IMR-90 (cell line): ENCODE measurements at regions of chr5 and their contacts with region 1.

Region 1: DNA sequence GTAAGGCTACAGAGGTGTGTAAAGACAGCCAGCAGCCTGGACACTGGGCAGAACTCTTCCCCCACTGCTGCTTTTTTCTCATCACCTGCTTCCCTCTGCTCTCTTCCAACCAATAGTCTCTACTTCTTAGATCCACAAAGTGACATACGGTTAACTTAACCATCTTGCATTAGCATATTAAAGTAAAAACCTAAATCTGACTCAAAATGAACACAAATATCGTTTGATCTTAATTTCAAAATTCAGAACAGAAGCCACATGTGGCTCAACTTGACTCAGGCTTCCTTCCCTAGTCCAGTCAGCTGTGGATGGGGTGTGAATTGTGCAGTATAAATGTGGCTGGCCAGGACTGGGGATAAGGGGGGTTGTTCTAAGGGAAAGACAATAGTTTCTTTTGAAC is 114.3 kb downstream of the STARD4 start:
- DNase-seq: no peak
- ATAC-seq: no peak
- H3K4me3 ChIP-seq: no peak overlapping the region
- H3K27ac ChIP-seq: no peak overlapping the region
- H3K4me1 ChIP-seq: no peaks in the 10 kb centered on the region
- H3K27me3 ChIP-seq: no peaks in the 10 kb centered on the region
- CTCF ChIP-seq: no peak
- POLR2A ChIP-seq: no peak
- RAD21 ChIP-seq: no peak

Region 2: GRCh38 chr5:110458313-110458712 is 939.7 kb before region 1 on chr5:
- CTCF ChIA-PET with region 1: no interaction called
- POLR2A ChIA-PET with region 1: no interaction called
- dilution Hi-C with region 1: no loop called
- in situ Hi-C with region 1: no loop called
- intact Hi-C with region 1: no loop called
- DNase-seq: no peak
- ATAC-seq: no peak
- H3K4me3 ChIP-seq: no peak overlapping the region
- H3K27ac ChIP-seq: no peak overlapping the region
- H3K4me1 ChIP-seq: no peaks in the 10 kb centered on the region
- H3K27me3 ChIP-seq: no peaks in the 10 kb centered on the region
- CTCF ChIP-seq: no peak
- POLR2A ChIP-seq: no peak
- RAD21 ChIP-seq: no peak

Region 3: GRCh38 chr5:111439473-111440075 is 41.6 kb after region 1 on chr5:
- CTCF ChIA-PET with region 1: no interaction called
- POLR2A ChIA-PET with region 1: no interaction called
- dilution Hi-C with region 1: no loop called
- in situ Hi-C with region 1: no loop called
- intact Hi-C with region 1: loop called (anchors 5 kb)
- DNase-seq: peak; percentile 65
- ATAC-seq: peak; percentile 83
- H3K4me3 ChIP-seq: no peak overlapping the region
- H3K27ac ChIP-seq: no peak overlapping the region; the same call in 1 of the 2 replicates
- H3K4me1 ChIP-seq: peaks cover 9% of the 10 kb centered on the region
- H3K27me3 ChIP-seq: no peaks in the 10 kb centered on the region
- CTCF ChIP-seq: no peak
- POLR2A ChIP-seq: no peak
- RAD21 ChIP-seq: no peak

Region 4: DNA sequence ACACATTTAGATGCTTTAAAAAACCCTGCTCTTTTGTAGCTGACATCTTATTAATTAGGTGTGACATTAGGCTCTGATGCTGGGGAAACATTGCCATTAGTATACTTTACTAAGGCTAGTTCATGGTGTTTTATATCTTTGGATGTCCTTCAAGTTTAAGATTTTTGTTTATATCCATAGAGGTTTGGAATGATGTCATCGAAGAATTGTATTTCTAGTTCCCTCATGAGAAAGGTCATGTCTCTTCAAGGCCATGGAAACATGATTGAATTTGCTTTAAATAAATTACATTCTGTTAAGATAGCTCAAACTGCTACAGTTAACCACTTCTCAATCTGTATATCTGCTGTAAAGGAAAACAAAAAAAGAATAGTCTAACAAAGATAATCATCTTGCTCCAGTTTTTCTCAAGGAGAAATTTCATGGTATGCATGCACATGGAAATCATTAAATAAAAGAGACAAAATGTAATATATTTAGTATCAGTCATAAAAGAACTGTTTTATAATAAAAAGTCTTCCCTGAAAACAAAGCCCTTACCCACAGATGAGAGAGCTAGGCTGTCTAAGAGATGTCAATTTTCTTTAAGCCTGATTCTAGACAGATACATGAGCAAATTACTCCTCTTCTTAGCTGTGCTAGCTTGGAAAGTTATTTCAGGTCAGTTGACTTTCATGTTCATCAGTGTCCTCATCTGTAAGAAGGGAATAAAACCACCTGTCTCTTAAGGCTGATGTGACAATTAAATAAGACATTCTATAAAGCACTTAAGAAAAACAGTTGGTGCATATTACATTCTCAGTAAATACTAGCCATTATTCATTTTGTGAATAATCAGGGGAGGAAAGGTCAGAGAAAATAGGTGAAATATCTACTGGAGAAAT is 139.4 kb after region 1 on chr5:
- CTCF ChIA-PET with region 1: no interaction called
- POLR2A ChIA-PET with region 1: no interaction called
- dilution Hi-C with region 1: no loop called
- in situ Hi-C with region 1: no loop called
- intact Hi-C with region 1: no loop called
- DNase-seq: peak; percentile 78
- ATAC-seq: peak; percentile 40
- H3K4me3 ChIP-seq: no peak overlapping the region
- H3K27ac ChIP-seq: peak overlapping the region; percentile 52; the same call in 1 of the 2 replicates
- H3K4me1 ChIP-seq: peaks cover 3% of the 10 kb centered on the region; the same call in 1 of the 2 replicates
- H3K27me3 ChIP-seq: no peaks in the 10 kb centered on the region
- CTCF ChIP-seq: no peak
- POLR2A ChIP-seq: no peak
- RAD21 ChIP-seq: no peak